SK-N-SH (cell line): ENCODE measurements at regions of chr6 and their contacts with region 1.

Region 1: GRCh38 chr6:156686995-156687788 is 90.0 kb upstream of the ARID1B start:
- DNase-seq: peak; percentile 97
- H3K4me3 ChIP-seq: peak overlapping the region; percentile 72 to 76
- H3K27ac ChIP-seq: peak overlapping the region; percentile 98 to 99
- H3K4me1 ChIP-seq: peaks cover 6% of the 10 kb centered on the region in 2 experiments; a peak in 3 of 4 replicates
- H3K27me3 ChIP-seq: no peaks in the 10 kb centered on the region
- CTCF ChIP-seq: no peak
- EP300 ChIP-seq: no peak
- RAD21 ChIP-seq: 0 out of 2 replicates have a peak, but pooled peaks have one; percentile 1

Region 2: GRCh38 chr6:156776840-156777576 is 89.8 kb after region 1 on chr6 and contains the start of gene ARID1B:
- CTCF ChIA-PET with region 1: interaction called, 5 read pairs
- POLR2A ChIA-PET with region 1: interaction called, 18 read pairs
- DNase-seq: peak; percentile 92
- H3K4me3 ChIP-seq: peak within 1 kb of the TSS; percentile 66 to 75
- H3K27ac ChIP-seq: peak within 1 kb of the TSS; percentile 96 to 99
- H3K4me1 ChIP-seq: peaks cover 11 to 12% of the 10 kb centered on the region in 2 experiments; a peak in 3 of 4 replicates
- H3K27me3 ChIP-seq: no peaks in the 10 kb centered on the region
- CTCF ChIP-seq: no peak
- EP300 ChIP-seq: no peak
- RAD21 ChIP-seq: no peak
- polyA plus RNA-seq, gene ARID1B: 13.2 and 13.6 TPM in 2 replicates

Region 3: GRCh38 chr6:156925718-156926615 is 238.8 kb after region 1 on chr6:
- CTCF ChIA-PET with region 1: no interaction called
- POLR2A ChIA-PET with region 1: no interaction called
- DNase-seq: no peak
- H3K4me3 ChIP-seq: no peak overlapping the region
- H3K27ac ChIP-seq: no peak overlapping the region
- H3K4me1 ChIP-seq: peaks cover 6 to 15% of the 10 kb centered on the region in 2 experiments; a peak in 3 of 4 replicates
- H3K27me3 ChIP-seq: no peaks in the 10 kb centered on the region
- CTCF ChIP-seq: no peak
- EP300 ChIP-seq: no peak
- RAD21 ChIP-seq: no peak